ENCODE measurements at regions of chr5 and their contacts with region 1.

Region 1: DNA sequence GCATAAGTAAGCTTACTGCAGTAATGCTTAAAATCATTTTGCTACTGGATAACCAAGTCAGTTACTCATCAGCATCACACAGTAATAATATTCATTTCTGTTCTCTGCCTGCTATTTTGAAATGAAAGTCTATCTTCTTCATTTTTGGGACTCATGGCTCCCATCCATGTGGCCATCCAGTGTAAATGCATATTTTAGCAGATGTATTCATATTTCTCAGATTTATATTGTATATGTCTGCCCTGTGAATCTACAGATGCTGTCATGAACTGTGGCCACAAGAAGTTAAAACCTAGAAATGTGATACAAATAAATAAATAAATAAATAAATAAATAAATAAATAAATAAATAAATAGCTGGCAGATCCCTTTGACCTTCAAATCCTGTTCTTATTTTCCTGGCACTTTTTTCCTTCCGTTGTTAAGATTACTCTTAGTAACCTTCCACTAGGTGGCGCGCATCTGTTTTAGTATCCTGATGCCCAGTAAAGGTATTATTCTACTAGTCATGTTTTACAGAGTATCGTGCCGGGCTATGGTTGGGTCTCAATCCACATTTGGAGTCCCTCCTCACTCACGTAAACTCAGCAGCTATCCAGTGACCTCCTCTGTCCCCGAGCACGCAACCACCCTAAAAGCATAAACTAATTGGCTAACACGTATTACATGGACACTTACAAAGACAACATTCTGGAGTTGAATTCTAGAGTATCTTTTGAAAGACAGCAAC is 79.2 kb upstream of the IL7R start:
- DNase-seq: no peak
- H3K4me3 ChIP-seq: no peak overlapping the region
- H3K27ac ChIP-seq: no peak overlapping the region
- H3K4me1 ChIP-seq: peaks cover 11% of the 10 kb centered on the region
- H3K27me3 ChIP-seq: no peaks in the 10 kb centered on the region
- CTCF ChIP-seq: peak; percentile 72

Region 2: DNA sequence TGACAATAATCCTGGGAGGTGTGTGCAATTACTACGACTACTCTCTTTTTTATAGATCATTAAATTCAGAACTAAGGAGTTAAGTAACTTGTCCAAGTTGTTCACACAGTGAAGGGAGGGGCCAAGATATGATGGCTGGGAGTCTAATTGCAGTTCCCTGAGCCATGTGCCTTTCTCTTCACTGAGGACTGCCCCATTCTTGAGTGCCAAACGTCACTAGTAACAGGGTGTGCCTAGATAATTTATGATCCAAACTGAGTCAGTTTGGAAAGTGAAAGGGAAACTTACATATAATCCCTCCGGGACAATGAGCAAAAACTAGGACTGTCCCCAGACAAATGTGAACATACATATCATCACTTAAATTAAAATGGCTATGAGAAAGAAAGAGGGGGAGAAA is 99.4 kb after region 1 on chr5:
- intact Hi-C with region 1: no loop called
- DNase-seq: no peak
- H3K4me3 ChIP-seq: no peak overlapping the region
- H3K27ac ChIP-seq: no peak overlapping the region
- H3K4me1 ChIP-seq: no peaks in the 10 kb centered on the region
- H3K27me3 ChIP-seq: peaks cover 4% of the 10 kb centered on the region
- CTCF ChIP-seq: no peak

Region 3: GRCh38 chr5:35926389-35927051 is 149.0 kb after region 1 on chr5:
- intact Hi-C with region 1: loop called (anchors 5 kb)
- DNase-seq: no peak
- H3K4me3 ChIP-seq: no peak overlapping the region
- H3K27ac ChIP-seq: no peak overlapping the region
- H3K4me1 ChIP-seq: peaks cover 4% of the 10 kb centered on the region
- H3K27me3 ChIP-seq: peaks cover 83% of the 10 kb centered on the region
- CTCF ChIP-seq: peak; percentile 84